ENCODE measurements at regions of chr16 and their contacts with region 1.

Region 1: GRCh38 chr16:14449790-14450480 is 180.1 kb downstream of the PARN start:
- DNase-seq: no peak

Region 2: GRCh38 chr16:14364386-14365204 is 85.3 kb before region 1 on chr16:
- intact Hi-C with region 1: no loop called
- DNase-seq: no peak

Region 3: DNA sequence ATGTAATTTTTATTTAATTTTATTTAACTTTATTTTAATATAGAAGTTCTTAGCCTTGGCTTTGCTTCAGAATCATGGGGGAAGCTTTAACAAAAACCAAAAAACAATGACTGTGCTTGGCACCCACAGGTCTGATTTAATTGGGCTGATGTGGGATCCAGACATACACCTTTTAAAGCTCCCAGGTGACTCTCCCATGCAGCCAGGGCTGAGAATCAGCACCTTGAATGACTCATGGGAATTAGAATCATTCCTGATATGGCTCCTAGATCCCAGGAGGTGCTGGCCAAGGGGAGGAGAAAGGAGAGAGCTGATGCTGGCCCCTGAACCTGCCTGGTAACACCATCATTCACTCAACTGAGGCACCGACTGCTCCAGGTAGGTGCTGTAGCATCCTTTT is 60.6 kb before region 1 on chr16:
- intact Hi-C with region 1: loop called in 1 of 2 experiments (anchors 10 kb)
- DNase-seq: no peak

Region 4: GRCh38 chr16:16197847-16198365 is 1748.0 kb after region 1 on chr16:
- intact Hi-C with region 1: no loop called
- DNase-seq: no peak